Activated CD4-positive, alpha-beta T cell treated with anti-CD3 and anti-CD28 coated beads for 36 hours (primary cell): ENCODE measurements at regions of chr9 and their contacts with region 1.

Region 1: DNA sequence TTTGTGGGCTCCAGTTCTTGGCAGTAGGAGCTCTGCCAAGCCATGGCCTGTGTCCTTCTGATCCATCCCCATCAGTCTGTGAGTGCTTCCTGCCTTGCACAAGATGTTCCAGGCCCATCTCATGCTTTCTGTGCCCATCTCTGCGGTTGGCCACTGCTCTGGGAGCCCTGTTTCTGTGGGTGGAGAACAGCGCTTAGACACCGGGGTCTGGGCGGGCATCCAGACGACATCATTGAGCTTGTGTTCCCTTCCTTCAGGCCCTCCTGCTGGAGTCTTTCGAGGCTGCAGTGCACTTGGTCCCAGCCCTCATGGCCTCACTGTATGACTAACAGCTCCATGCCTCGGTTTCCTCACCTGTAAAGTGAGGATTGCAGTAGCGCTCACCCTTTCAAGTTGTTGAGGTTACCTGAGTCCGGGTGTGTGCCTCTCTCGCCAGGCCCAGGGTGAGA is 14.9 kb upstream of the CARD19 start:
- DNase-seq: no peak
- ATAC-seq: no peak
- H3K4me3 Mint-ChIP-seq: no peak overlapping the region
- H3K27ac Mint-ChIP-seq: peak overlapping the region; percentile 0
- H3K4me1 Mint-ChIP-seq: peaks cover 36% of the 10 kb centered on the region
- H3K27me3 Mint-ChIP-seq: no peaks in the 10 kb centered on the region

Region 2: DNA sequence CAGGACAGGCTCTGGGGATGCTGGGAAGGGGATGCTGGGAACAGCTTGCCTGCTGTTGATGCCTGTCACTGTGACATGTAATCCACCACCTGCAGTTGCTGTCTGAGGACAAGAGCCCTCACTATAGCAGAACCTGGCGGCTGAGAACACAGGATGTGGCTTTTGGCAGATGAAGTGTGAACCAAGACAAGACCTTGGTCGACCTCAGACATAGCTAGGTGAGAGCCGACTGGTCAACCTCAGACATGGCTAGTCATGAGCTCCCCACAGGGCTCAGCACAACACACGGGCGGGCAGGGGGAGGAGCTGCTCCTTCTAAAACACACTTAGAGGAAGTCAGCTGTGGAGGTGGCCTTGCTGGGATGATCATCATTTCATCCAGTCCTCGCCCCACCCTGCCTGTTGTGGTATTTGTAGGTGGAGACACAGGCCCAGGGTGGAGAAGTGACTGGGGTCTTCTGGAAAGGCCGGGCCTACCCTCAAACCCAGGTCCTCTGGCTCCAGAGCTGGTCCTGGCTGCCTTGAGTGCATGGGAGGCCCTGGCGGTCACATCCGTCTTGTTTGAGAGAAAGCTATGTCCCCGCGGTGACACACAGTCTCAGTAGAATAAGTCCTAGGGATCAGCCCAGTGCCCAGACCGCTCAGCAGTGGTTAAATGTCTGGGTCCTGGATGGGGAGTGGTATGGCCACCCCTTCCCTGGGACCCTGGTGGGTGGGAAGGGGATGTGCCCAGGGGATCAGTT is 16.5 kb before region 1 on chr9:
- CTCF ChIA-PET with region 1: interaction called, 4 read pairs
- POLR2A ChIA-PET with region 1: interaction called, 4 read pairs
- intact Hi-C with region 1: loop called in 1 of 2 experiments (anchors 2 kb)
- DNase-seq: peak; percentile 96
- ATAC-seq: peak; percentile 90
- H3K4me3 Mint-ChIP-seq: peak overlapping the region; percentile 76
- H3K27ac Mint-ChIP-seq: peak overlapping the region; percentile 98
- H3K4me1 Mint-ChIP-seq: peaks cover 94% of the 10 kb centered on the region
- H3K27me3 Mint-ChIP-seq: no peaks in the 10 kb centered on the region